IMR-90 (cell line): ENCODE measurements at regions of chr17 and their contacts with region 1.

Region 1: DNA sequence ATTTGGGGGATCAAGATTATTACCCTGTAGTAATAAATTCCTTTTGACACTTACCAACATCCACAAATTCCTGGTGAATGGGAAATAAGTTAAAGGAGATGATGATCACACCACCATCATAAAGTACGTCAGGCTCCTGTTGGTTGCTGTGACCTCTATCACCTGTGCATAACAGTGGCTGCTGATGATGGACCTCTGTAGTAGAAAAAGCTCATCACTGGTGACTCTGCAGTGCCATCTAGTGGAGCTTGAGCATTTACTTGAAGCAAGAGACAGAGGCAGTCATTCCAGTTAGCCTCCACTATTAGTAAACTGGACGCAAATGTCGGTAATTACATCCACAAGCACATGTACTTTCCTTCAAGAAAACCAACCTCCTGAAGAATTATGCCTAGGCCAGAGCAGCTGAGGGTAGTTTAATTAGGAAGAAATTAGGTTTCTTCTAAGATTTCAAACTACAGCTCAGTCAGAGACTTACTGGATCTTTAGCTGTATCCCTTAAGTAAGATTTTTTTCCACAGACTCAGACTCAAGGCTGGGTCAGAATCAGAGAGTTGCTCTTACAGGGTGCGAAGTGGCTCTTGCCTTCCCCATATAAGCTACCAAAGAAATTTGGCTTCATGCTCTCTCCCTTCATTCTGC is 39.3 kb downstream of the CYB561 start:
- DNase-seq: peak; percentile 97
- ATAC-seq: peak; percentile 84
- H3K4me3 ChIP-seq: no peak overlapping the region
- H3K27ac ChIP-seq: no peak overlapping the region
- H3K4me1 ChIP-seq: peaks cover 10% of the 10 kb centered on the region
- H3K27me3 ChIP-seq: no peaks in the 10 kb centered on the region
- CTCF ChIP-seq: peak; percentile 88
- POLR2A ChIP-seq: no peak
- RAD21 ChIP-seq: peak; percentile 90

Region 2: GRCh38 chr17:62562656-62563055 is 844.2 kb before region 1 on chr17:
- CTCF ChIA-PET with region 1: no interaction called
- POLR2A ChIA-PET with region 1: no interaction called
- dilution Hi-C with region 1: no loop called
- in situ Hi-C with region 1: no loop called
- intact Hi-C with region 1: loop called (anchors 10 kb)
- DNase-seq: peak; percentile 68
- ATAC-seq: no peak
- H3K4me3 ChIP-seq: no peak overlapping the region
- H3K27ac ChIP-seq: no peak overlapping the region
- H3K4me1 ChIP-seq: peaks cover 7% of the 10 kb centered on the region
- H3K27me3 ChIP-seq: no peaks in the 10 kb centered on the region
- CTCF ChIP-seq: no peak
- POLR2A ChIP-seq: no peak
- RAD21 ChIP-seq: no peak

Region 3: DNA sequence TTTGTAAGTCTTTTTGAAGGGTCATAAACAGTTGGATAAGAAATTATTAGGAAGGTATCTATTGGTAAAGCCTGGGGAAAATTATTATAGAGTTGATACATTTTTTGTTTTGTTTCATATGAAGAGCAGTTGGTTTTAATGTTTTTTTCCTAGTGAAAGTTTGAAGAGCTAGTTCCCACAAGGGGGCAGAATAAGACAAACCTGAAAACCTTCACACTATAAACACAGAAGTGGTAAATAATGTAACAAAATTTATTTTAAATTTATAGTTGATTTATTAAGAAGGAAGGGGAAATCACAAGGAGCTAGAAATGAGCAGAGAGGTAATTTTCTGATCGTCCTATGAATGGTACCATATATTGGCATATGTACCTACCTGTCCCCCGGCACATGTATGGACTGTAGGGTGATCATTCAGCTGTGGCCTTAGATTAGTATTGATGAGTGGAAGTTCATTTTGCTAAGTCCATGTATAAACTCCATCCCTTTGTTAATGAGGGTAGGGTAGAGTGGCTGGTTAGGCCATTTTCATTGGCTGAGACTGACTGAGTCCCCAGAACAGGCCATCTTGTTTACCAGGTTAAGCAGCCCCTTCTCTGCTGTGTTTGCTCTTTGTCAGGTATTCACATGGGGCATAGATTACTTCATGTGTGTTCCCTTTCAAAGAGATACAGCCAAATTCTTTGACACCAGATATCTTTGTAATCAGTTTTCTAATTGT is 324.4 kb before region 1 on chr17:
- CTCF ChIA-PET with region 1: interaction called, 14 read pairs
- POLR2A ChIA-PET with region 1: interaction called, 5 read pairs
- dilution Hi-C with region 1: no loop called
- in situ Hi-C with region 1: loop called (anchors 5 kb)
- intact Hi-C with region 1: loop called (anchors 1 kb)
- DNase-seq: peak; percentile 58
- ATAC-seq: peak; percentile 30
- H3K4me3 ChIP-seq: no peak overlapping the region
- H3K27ac ChIP-seq: no peak overlapping the region
- H3K4me1 ChIP-seq: peaks cover 8% of the 10 kb centered on the region; the same call in 1 of the 2 replicates
- H3K27me3 ChIP-seq: no peaks in the 10 kb centered on the region
- CTCF ChIP-seq: peak; percentile 62
- POLR2A ChIP-seq: no peak
- RAD21 ChIP-seq: peak; percentile 65

Region 4: DNA sequence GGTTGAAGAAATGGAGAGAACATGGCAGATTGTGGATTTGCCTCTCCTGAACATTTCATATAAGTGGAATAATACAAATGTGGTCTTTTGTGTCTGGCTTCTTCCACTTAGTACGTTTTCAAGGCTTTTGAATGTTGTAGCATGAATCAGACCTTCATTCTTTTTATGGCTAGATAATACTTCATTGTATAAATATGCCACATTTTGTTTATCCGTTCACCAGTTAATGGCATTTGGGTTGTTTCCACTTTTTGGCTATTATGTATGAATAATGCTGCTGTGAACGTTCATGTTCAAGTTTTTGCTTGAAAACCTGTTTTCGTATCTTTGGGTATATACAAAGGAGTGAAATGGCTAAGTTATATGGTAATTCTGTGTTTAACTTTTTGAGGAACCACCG is 310.4 kb before region 1 on chr17:
- CTCF ChIA-PET with region 1: interaction called, 3 read pairs
- POLR2A ChIA-PET with region 1: no interaction called
- dilution Hi-C with region 1: no loop called
- in situ Hi-C with region 1: no loop called
- intact Hi-C with region 1: loop called (anchors 5 kb)
- DNase-seq: peak; percentile 88
- ATAC-seq: peak; percentile 81
- H3K4me3 ChIP-seq: no peak overlapping the region
- H3K27ac ChIP-seq: no peak overlapping the region
- H3K4me1 ChIP-seq: peaks cover 6% of the 10 kb centered on the region
- H3K27me3 ChIP-seq: no peaks in the 10 kb centered on the region
- CTCF ChIP-seq: no peak
- POLR2A ChIP-seq: no peak
- RAD21 ChIP-seq: no peak

Region 5: GRCh38 chr17:63387656-63388340 is 19.0 kb before region 1 on chr17:
- CTCF ChIA-PET with region 1: no interaction called
- POLR2A ChIA-PET with region 1: no interaction called
- dilution Hi-C with region 1: no loop called
- in situ Hi-C with region 1: no loop called
- intact Hi-C with region 1: no loop called
- DNase-seq: no peak
- ATAC-seq: no peak
- H3K4me3 ChIP-seq: no peak overlapping the region
- H3K27ac ChIP-seq: no peak overlapping the region
- H3K4me1 ChIP-seq: peaks cover 3% of the 10 kb centered on the region; the same call in 1 of the 2 replicates
- H3K27me3 ChIP-seq: no peaks in the 10 kb centered on the region
- CTCF ChIP-seq: no peak
- POLR2A ChIP-seq: no peak
- RAD21 ChIP-seq: no peak